Esophagus muscularis mucosa (tissue), 4 donors: ENCODE measurements at regions of chr16 and their contacts with region 1.

Region 1: GRCh38 chr16:75198135-75198600 is 8.8 kb downstream of the CTRB2 start:
- DNase-seq: no peak
- H3K4me3 ChIP-seq: no peak overlapping the region
- H3K27ac ChIP-seq: no peak overlapping the region
- H3K4me1 ChIP-seq: peaks cover 14 to 24% (median 19%) of the 10 kb centered on the region in 4 donors
- H3K27me3 ChIP-seq: peaks cover 0 to 21% (median 2%) of the 10 kb centered on the region in 4 donors
- CTCF ChIP-seq: no peak
- EP300 ChIP-seq: no peak
- POLR2A ChIP-seq: no peak

Region 2: GRCh38 chr16:75148311-75149195 is 49.6 kb before region 1 on chr16 and contains the start of gene ZFP1:
- intact Hi-C with region 1: loop called (anchors 5 kb)
- DNase-seq: peak; percentile 98
- H3K4me3 ChIP-seq: peak within 1 kb of the TSS; percentile 85 to 100 (median 100)
- H3K27ac ChIP-seq: peak within 1 kb of the TSS; percentile 98 to 100 (median 99)
- H3K4me1 ChIP-seq: peaks cover 10 to 18% (median 12%) of the 10 kb centered on the region in 4 donors
- H3K27me3 ChIP-seq: no peaks in the 10 kb centered on the region
- CTCF ChIP-seq: no peak
- EP300 ChIP-seq: no peak
- POLR2A ChIP-seq: peak; percentile 26
- total RNA-seq, gene ZFP1: 8.4 to 17.4 (median 12.0) TPM

Region 3: DNA sequence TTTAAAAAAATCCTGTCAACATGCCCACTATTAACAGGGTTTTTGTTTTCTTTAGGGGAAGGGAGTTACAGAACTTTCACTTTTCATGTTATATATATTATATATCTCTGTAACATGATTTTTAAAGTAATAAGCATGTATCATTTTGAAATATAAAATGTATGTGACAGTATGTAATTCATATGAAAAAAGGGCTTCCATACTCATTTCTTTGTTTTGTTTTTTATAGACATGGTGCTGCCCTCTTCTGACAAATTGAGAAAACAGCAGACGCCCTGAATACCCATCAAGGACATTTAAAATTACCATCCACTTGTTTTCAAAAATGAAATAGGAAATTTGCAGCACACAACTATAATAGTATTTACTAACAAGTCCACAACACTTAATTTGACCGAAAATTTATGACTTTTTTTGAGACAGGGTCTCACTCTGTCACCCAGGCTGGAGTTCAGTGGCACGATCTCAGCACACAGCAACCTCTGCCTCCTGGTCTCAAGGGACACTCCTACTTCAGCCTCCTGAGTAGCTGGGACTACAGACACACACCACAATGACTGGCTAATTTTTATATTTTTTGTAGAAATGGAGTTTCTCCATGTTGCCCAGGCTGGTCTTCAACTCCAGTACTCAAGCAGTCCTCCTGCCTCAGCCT is 204.8 kb after region 1 on chr16:
- intact Hi-C with region 1: loop called (anchors 5 kb)
- DNase-seq: no peak
- H3K4me3 ChIP-seq: no peak overlapping the region
- H3K27ac ChIP-seq: peak overlapping the region; percentile 70 to 80 (median 75)
- H3K4me1 ChIP-seq: peaks cover 20 to 27% (median 25%) of the 10 kb centered on the region in 4 donors
- H3K27me3 ChIP-seq: no peaks in the 10 kb centered on the region
- CTCF ChIP-seq: peak; percentile 74 to 81 (median 77)
- EP300 ChIP-seq: no peak
- POLR2A ChIP-seq: no peak

Region 4: GRCh38 chr16:75919664-75920063 is 721.5 kb after region 1 on chr16:
- intact Hi-C with region 1: no loop called
- DNase-seq: no peak
- H3K4me3 ChIP-seq: no peak overlapping the region
- H3K27ac ChIP-seq: no peak overlapping the region
- H3K4me1 ChIP-seq: peaks cover 0 to 20% (median 0%) of the 10 kb centered on the region in 4 donors
- H3K27me3 ChIP-seq: no peaks in the 10 kb centered on the region
- CTCF ChIP-seq: no peak
- EP300 ChIP-seq: no peak
- POLR2A ChIP-seq: no peak